Endothelial cell of umbilical vein (primary cell): ENCODE measurements at regions of chr2 and their contacts with region 1.

Region 1: GRCh38 chr2:58633576-58634365 is 392.6 kb upstream of the FANCL start:
- DNase-seq: peak; percentile 91
- H3K4me3 ChIP-seq: no peak overlapping the region
- H3K27ac ChIP-seq: peak overlapping the region; percentile 96
- H3K4me1 ChIP-seq: peaks cover 45% of the 10 kb centered on the region
- H3K27me3 ChIP-seq: no peaks in the 10 kb centered on the region
- CTCF ChIP-seq: no peak
- POLR2A ChIP-seq: peak; percentile 35

Region 2: DNA sequence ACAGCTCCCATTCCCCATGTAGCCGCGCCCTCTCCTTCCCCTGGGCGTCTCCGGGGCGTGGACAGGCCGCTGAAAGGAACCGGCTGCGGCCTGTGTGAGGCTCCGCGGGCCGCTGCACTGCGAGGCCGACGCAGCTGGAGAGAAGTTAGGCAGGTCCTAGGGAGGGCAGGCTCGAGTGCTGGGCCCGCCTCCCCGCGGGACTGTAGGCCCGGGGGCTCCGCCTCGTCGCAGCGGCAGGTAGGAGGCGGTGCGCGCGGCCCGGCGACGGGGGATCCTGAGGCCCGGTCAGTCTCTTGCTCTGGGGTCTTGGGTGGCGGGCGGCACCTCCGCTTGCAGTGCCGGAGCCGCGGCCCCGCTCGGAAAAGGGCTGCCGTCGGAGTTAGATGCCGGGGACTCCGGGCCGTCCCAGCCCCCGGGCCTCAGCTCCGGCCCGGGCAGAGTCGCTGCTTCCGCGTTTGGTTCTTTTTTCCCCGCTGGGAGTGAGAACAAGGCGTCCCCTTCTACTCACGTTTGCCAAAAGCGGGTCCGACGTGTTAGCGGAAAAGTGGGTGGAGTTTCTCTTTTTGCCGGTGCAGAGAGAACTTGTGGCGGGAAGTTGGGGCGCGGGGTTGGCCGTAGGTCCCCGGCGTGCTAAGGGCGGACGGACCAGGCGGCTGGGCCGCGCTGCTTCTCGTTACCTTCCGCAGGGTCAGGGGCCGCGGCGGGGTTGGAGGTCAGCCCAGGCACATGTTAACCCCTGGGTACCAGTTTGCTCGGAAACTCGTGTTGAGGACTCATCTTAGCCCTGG is 587.0 kb before region 1 on chr2 and contains the start of gene VRK2:
- CTCF ChIA-PET with region 1: no interaction called
- POLR2A ChIA-PET with region 1: no interaction called
- dilution Hi-C with region 1: no loop called
- intact Hi-C with region 1: loop called (anchors 2 kb)
- DNase-seq: peak; percentile 94
- H3K4me3 ChIP-seq: peak within 1 kb of the TSS; percentile 60 to 74 (median 68)
- H3K27ac ChIP-seq: peak within 1 kb of the TSS; percentile 97
- H3K4me1 ChIP-seq: peaks cover 45% of the 10 kb centered on the region
- H3K27me3 ChIP-seq: no peaks in the 10 kb centered on the region
- CTCF ChIP-seq: no peak
- POLR2A ChIP-seq: peak; percentile 92
- total RNA-seq, gene VRK2: 35.2 and 42.0 TPM in 2 replicates

Region 3: GRCh38 chr2:58571181-58571852 is 62.5 kb before region 1 on chr2:
- CTCF ChIA-PET with region 1: interaction called, 8 read pairs
- POLR2A ChIA-PET with region 1: no interaction called
- dilution Hi-C with region 1: no loop called
- intact Hi-C with region 1: loop called (anchors 1 kb)
- DNase-seq: peak; percentile 84
- H3K4me3 ChIP-seq: no peak overlapping the region
- H3K27ac ChIP-seq: no peak overlapping the region
- H3K4me1 ChIP-seq: peaks cover 2% of the 10 kb centered on the region
- H3K27me3 ChIP-seq: no peaks in the 10 kb centered on the region
- CTCF ChIP-seq: peak; percentile 69 to 81
- POLR2A ChIP-seq: no peak

Region 4: DNA sequence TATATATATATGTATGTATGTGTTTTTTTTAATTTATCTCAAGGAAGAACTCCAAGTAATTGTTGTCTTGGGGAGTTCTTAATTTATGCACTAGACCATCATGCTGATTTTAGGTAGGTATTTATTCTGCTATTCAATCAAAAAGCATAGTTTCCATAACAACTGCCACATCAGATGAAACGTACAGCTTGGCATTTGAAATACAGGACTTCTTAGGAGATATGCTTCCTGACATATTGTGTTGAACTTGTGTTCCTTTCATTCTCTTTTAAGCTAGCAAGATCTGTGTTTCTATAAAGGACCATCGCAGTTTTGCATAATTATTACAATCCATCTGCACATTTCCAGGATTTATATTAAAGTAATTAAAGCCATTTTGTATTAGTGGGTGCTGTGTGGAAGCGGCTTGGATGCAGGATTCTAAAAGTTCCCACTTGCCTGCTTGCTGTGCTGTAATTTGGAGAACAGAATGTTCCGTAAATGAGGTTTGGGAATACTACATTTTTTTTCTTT is 49.1 kb before region 1 on chr2:
- CTCF ChIA-PET with region 1: no interaction called
- POLR2A ChIA-PET with region 1: no interaction called
- dilution Hi-C with region 1: no loop called
- intact Hi-C with region 1: no loop called
- DNase-seq: no peak
- H3K4me3 ChIP-seq: no peak overlapping the region
- H3K27ac ChIP-seq: no peak overlapping the region
- H3K4me1 ChIP-seq: no peaks in the 10 kb centered on the region
- H3K27me3 ChIP-seq: no peaks in the 10 kb centered on the region
- CTCF ChIP-seq: no peak
- POLR2A ChIP-seq: no peak

Region 5: DNA sequence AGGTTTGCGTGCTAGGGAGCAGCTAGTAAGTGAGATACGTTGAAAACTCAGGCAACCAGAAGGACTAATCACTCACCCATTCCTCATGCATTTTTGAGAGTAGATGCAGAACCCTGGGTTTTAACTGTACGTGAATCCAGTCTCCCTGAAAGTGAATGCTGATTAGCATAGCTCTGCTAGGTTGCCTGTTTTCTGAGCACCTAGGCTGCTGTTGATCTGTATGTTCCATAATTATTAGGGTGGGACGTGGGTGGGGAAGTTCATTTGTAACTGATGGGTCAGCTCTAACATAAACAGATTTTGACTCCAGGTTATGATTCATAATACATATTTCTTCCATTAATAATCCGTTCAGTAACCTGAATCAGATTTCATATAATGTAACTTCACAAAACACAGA is 13.7 kb before region 1 on chr2:
- CTCF ChIA-PET with region 1: interaction called, 5 read pairs
- POLR2A ChIA-PET with region 1: interaction called, 5 read pairs
- dilution Hi-C with region 1: no loop called
- intact Hi-C with region 1: loop called (anchors 1 kb)
- DNase-seq: peak; percentile 63
- H3K4me3 ChIP-seq: peak overlapping the region in 1 of 3 experiments; percentile 7
- H3K27ac ChIP-seq: peak overlapping the region; percentile 76
- H3K4me1 ChIP-seq: peaks cover 33% of the 10 kb centered on the region
- H3K27me3 ChIP-seq: no peaks in the 10 kb centered on the region
- CTCF ChIP-seq: no peak
- POLR2A ChIP-seq: peak; percentile 37

Region 6: GRCh38 chr2:60550178-60550983 is 1916.6 kb after region 1 on chr2:
- CTCF ChIA-PET with region 1: no interaction called
- POLR2A ChIA-PET with region 1: no interaction called
- dilution Hi-C with region 1: no loop called
- intact Hi-C with region 1: loop called (anchors 5 kb)
- DNase-seq: peak; percentile 52
- H3K4me3 ChIP-seq: peak overlapping the region; percentile 44 to 67 (median 60)
- H3K27ac ChIP-seq: no peak overlapping the region
- H3K4me1 ChIP-seq: peaks cover 22% of the 10 kb centered on the region
- H3K27me3 ChIP-seq: peaks cover 40 to 68% of the 10 kb centered on the region in 2 experiments
- CTCF ChIP-seq: peak; percentile 39 to 61
- POLR2A ChIP-seq: no peak